AG04450 (cell line): ENCODE measurements at regions of chr1 and their contacts with region 1.

Region 1: DNA sequence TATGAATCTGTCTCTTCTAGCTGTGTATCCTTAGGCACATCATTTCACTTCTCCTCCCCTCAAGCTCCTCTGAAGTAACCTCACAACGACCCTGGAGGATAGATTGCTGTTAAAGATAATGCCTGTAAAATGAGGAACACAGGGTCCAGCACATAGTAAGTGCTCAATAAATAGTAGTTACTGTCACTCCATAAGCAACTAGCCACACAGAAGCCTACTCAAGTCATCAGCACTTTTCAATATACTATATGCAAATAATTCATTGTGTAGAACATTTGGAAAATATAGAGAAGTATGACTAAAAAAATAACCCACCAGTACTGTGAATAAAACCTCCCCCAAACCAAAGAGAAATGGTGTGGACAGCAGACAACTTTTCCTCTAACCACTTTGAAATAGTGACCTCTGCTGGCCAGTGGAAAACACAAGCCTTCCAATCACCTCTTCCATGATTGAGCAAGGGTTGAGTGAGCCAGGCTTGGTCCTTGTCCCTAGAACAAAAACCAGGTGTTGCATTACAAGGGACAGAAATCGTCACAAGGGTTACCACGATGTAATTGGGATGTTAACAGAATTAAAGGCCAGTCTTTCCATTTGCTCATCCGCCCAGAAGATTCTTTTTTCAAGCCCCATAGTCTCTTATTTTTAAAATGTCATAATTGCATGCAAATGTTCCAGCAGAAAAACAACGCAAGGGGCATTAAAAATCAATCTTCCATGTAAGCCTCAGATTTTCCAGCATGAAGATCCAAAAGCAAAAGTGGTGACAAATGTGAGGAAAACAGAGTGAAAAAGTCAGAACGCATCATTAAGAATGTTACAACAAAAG is 15.7 kb upstream of the GLIS1 start:
- DNase-seq: no peak
- H3K4me3 ChIP-seq: no peak overlapping the region
- H3K27ac ChIP-seq: no peak overlapping the region
- H3K27me3 ChIP-seq: no peaks in the 10 kb centered on the region
- CTCF ChIP-seq: peak; percentile 80

Region 2: GRCh38 chr1:53376041-53376461 is 378.6 kb before region 1 on chr1:
- CTCF ChIA-PET with region 1: interaction called, 13 read pairs
- POLR2A ChIA-PET with region 1: no interaction called
- DNase-seq: no peak
- H3K4me3 ChIP-seq: no peak overlapping the region
- H3K27ac ChIP-seq: no peak overlapping the region
- H3K27me3 ChIP-seq: peaks cover 17% of the 10 kb centered on the region
- CTCF ChIP-seq: no peak

Region 3: DNA sequence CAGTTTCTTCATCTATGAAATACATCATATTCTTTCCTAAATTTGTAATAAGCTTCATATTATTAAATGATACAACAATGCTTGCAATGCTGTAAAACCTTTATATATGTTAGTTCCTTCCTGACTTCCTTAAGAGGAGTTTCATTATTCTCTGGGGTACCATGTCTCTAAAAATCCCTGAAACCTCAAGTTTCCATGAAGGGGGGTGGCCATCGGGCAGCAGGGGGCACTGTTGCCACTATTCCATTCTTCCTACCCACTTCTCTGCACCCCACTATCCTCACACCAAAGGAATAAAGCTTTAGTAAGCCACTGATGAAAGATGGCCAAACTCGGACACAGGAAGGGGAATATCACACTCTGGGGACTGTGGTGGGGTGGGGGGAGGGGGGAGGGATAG is 304.5 kb before region 1 on chr1:
- CTCF ChIA-PET with region 1: interaction called, 11 read pairs
- POLR2A ChIA-PET with region 1: no interaction called
- DNase-seq: no peak
- H3K4me3 ChIP-seq: no peak overlapping the region
- H3K27ac ChIP-seq: no peak overlapping the region
- H3K27me3 ChIP-seq: no peaks in the 10 kb centered on the region
- CTCF ChIP-seq: peak; percentile 40

Region 4: GRCh38 chr1:53485478-53486394 is 269.0 kb before region 1 on chr1:
- CTCF ChIA-PET with region 1: interaction called, 65 read pairs
- POLR2A ChIA-PET with region 1: no interaction called
- DNase-seq: peak; percentile 52
- H3K4me3 ChIP-seq: no peak overlapping the region
- H3K27ac ChIP-seq: no peak overlapping the region
- H3K27me3 ChIP-seq: peaks cover 43% of the 10 kb centered on the region
- CTCF ChIP-seq: peak; percentile 92

Region 5: GRCh38 chr1:53715478-53715877 is 39.2 kb before region 1 on chr1:
- CTCF ChIA-PET with region 1: interaction called, 11 read pairs
- POLR2A ChIA-PET with region 1: no interaction called
- DNase-seq: no peak
- H3K4me3 ChIP-seq: no peak overlapping the region
- H3K27ac ChIP-seq: no peak overlapping the region
- H3K27me3 ChIP-seq: no peaks in the 10 kb centered on the region
- CTCF ChIP-seq: peak; percentile 61

Region 6: DNA sequence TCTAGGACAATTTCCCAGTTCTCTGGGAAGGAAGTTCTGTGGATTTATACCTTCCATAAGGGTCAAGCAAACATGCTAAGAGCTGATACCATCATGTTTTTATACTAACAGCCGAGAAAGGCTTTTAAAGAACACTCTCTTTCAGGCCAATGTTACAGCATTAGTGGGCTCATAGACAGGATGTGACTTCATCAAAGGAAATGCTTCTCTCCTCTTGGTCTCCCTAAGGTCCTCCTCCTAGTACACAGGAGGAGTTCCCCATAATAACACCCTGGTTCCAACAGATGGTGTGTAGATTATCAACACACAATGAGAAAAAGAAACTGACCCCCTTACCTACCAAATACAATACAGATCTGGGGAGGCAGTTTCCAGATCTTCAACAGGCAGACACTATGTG is 11.0 kb after region 1 on chr1:
- CTCF ChIA-PET with region 1: interaction called, 36 read pairs
- POLR2A ChIA-PET with region 1: no interaction called
- DNase-seq: no peak
- H3K4me3 ChIP-seq: no peak overlapping the region
- H3K27ac ChIP-seq: no peak overlapping the region
- H3K27me3 ChIP-seq: no peaks in the 10 kb centered on the region
- CTCF ChIP-seq: no peak

Region 7: GRCh38 chr1:53860967-53861411 is 106.3 kb after region 1 on chr1:
- CTCF ChIA-PET with region 1: no interaction called
- POLR2A ChIA-PET with region 1: no interaction called
- DNase-seq: peak; percentile 27
- H3K4me3 ChIP-seq: no peak overlapping the region
- H3K27ac ChIP-seq: no peak overlapping the region
- H3K27me3 ChIP-seq: no peaks in the 10 kb centered on the region
- CTCF ChIP-seq: peak; percentile 86